MCF 10A (cell line): ENCODE measurements at regions of chr14 and their contacts with region 1.

Region 1: DNA sequence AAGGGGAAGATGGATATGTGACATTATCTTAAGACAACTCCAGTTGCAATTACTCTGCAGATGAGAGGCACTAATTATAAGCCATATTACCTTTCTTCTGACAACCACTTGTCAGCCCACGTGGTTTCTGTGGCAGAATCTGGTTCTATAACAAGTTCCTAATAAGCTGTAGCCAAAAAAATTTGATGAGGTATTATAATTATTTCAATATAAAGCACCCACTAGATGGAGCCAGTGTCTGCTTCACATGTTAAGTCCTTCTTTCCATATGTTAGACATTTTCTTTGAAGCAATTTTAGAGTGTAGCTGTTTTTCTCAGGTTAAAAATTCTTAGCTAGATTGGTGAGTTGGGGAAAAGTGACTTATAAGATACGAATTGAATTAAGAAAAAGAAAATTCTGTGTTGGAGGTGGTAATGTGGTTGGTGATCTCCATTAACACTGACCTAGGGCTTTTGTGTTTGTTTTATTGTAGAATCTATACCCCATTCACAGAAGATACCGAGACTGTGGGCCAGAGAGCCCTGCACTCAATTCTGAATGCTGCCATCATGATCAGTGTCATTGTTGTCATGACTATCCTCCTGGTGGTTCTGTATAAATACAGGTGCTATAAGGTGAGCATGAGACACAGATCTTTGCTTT is 36.9 kb downstream of the PSEN1 start:
- DNase-seq: peak; percentile 60
- H3K4me3 Mint-ChIP-seq: no peak overlapping the region
- H3K27ac Mint-ChIP-seq: no peak overlapping the region
- H3K4me1 Mint-ChIP-seq: no peaks in the 10 kb centered on the region
- H3K27me3 Mint-ChIP-seq: no peaks in the 10 kb centered on the region
- CTCF ChIP-seq: peak; percentile 59

Region 2: DNA sequence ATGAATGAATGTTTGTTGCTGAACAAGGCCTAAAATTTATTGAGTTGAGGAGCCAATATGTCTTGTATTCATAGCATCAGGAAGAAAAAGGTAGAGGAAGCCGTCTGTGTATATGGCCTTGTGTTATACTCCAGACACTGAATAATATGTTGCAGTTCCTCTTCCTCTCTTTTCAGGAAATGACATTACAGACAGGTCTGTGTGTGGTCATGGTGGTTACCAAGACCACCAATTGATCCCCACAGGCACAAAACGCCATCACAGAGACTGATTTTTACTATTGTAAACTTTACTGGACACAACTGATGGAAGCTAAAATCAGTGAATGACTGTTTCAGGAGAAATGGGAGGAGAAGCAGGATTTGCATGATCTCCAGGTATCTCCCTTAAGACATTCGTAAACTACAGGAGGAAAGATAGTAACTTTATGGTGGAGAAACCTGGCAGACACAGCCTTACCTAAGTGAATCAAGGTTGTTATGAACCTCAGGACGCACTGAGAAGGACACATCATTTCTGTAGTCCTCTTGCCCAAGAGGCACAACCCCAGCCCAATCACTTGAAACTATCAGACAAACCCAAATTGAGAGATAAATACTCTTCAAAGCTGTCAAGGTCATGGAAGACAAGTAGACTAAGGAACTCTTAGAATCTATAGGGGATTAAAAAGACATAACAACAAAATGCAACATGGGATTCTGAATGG is 1575.1 kb before region 1 on chr14:
- CTCF ChIA-PET with region 1: no interaction called
- POLR2A ChIA-PET with region 1: no interaction called
- intact Hi-C with region 1: no loop called
- DNase-seq: no peak
- H3K4me3 Mint-ChIP-seq: no peak overlapping the region
- H3K27ac Mint-ChIP-seq: no peak overlapping the region
- H3K4me1 Mint-ChIP-seq: peaks cover 6% of the 10 kb centered on the region
- H3K27me3 Mint-ChIP-seq: no peaks in the 10 kb centered on the region
- CTCF ChIP-seq: no peak

Region 3: DNA sequence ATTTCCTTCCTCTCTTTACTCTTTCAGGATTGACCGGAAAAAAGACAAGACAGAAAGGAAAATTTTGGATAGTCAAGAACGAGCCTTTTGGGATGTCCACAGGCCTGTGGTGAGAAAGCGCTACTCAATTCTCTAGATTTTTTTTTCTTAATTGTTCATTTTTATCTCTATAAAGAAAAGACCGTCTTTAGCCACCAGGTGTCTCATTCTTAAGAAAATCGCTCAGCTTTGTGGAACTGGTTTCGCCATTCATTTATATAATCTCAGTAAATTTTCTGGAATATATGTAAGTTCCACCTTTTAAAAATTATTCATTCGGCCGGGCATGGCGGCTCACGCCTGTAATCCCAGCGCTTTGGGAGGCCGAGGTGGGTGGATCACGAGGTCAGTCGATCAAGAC is 700.4 kb before region 1 on chr14:
- CTCF ChIA-PET with region 1: no interaction called
- POLR2A ChIA-PET with region 1: no interaction called
- intact Hi-C with region 1: no loop called
- DNase-seq: no peak
- H3K4me3 Mint-ChIP-seq: no peak overlapping the region
- H3K27ac Mint-ChIP-seq: no peak overlapping the region
- H3K4me1 Mint-ChIP-seq: peaks cover 12% of the 10 kb centered on the region
- H3K27me3 Mint-ChIP-seq: peaks cover 6% of the 10 kb centered on the region
- CTCF ChIP-seq: peak; percentile 7

Region 4: DNA sequence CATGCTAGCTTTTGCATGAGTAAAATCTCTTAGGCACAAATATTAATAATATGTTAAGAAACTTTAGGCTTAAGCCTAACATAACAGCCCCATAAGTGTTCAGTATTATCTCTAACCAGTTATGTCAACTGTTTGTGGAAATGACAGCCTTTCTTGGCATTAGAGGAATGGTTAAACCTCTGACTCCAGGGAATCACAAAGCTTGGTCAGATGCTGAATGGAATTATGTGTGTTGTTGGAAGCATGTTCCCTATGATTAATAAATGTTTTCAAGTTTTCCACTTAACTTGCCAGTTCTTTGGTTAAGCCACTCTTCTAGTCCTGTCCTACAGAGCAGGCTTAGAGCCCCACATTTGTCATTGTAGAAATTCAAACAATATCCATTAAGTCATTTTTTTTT is 19.9 kb before region 1 on chr14:
- CTCF ChIA-PET with region 1: interaction called, 13 read pairs
- POLR2A ChIA-PET with region 1: no interaction called
- intact Hi-C with region 1: no loop called
- DNase-seq: no peak
- H3K4me3 Mint-ChIP-seq: no peak overlapping the region
- H3K27ac Mint-ChIP-seq: no peak overlapping the region
- H3K4me1 Mint-ChIP-seq: no peaks in the 10 kb centered on the region
- H3K27me3 Mint-ChIP-seq: no peaks in the 10 kb centered on the region
- CTCF ChIP-seq: no peak

Region 5: GRCh38 chr14:73283608-73284379 is 110.6 kb after region 1 on chr14:
- CTCF ChIA-PET with region 1: interaction called, 4 read pairs
- POLR2A ChIA-PET with region 1: interaction called, 3 read pairs
- intact Hi-C with region 1: loop called (anchors 5 kb)
- DNase-seq: no peak
- H3K4me3 Mint-ChIP-seq: no peak overlapping the region
- H3K27ac Mint-ChIP-seq: no peak overlapping the region
- H3K4me1 Mint-ChIP-seq: no peaks in the 10 kb centered on the region
- H3K27me3 Mint-ChIP-seq: no peaks in the 10 kb centered on the region
- CTCF ChIP-seq: no peak

Region 6: DNA sequence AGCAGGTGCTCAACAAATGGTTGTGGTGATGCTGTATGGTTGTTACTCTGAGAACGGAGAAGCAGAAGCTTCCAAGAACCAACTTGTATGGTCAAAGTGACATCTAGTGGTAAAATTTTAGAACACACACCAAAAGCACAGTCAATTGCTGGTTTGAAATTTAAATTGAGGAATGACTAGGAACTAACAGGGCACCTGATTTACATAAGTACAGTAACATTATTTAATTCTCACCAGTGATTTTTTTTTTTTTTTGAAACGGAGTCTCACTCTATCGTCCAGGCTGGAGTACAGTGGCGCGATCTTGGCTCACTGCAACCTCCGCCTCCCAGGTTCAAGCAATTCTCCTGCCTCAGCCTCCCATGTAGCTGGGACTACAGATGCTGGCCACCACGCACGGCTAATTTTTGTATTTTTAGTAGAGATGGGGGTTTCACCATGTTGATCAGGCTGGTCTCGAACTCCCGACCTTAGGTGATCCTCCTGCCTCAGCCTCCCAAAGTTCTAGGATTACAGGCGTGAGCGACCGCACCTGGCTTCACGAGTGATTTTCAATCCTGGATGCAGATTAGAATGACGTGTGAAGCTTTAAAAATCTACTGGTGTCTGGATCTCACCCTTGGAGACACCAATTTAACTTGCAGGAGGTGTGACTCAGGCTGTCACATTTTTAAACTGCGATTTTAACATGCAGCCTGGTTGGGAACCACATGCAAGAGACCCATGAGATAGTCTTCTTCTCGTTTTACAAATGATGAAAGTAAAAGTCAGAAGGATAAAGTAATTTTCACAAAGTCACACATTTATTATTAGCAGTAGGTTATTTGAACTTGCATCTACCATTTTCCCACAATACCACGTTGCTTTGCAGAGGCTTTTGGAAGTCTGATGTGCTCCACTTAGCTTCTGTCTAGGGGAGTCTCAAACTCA is 299.2 kb after region 1 on chr14:
- CTCF ChIA-PET with region 1: interaction called, 16 read pairs
- POLR2A ChIA-PET with region 1: interaction called, 5 read pairs
- intact Hi-C with region 1: loop called (anchors 1 kb)
- DNase-seq: peak; percentile 67
- H3K4me3 Mint-ChIP-seq: no peak overlapping the region
- H3K27ac Mint-ChIP-seq: no peak overlapping the region
- H3K4me1 Mint-ChIP-seq: peaks cover 5% of the 10 kb centered on the region
- H3K27me3 Mint-ChIP-seq: no peaks in the 10 kb centered on the region
- CTCF ChIP-seq: peak; percentile 68